A673 (cell line): ENCODE measurements at regions of chr16 and their contacts with region 1.

Region 1: GRCh38 chr16:67201411-67202223 is 2.7 kb downstream of the ELMO3 start:
- DNase-seq: no peak
- H3K4me3 ChIP-seq: no peak overlapping the region
- H3K27ac ChIP-seq: no peak overlapping the region
- H3K4me1 ChIP-seq: no peaks in the 10 kb centered on the region
- H3K27me3 ChIP-seq: no peaks in the 10 kb centered on the region
- CTCF ChIP-seq: no peak

Region 2: DNA sequence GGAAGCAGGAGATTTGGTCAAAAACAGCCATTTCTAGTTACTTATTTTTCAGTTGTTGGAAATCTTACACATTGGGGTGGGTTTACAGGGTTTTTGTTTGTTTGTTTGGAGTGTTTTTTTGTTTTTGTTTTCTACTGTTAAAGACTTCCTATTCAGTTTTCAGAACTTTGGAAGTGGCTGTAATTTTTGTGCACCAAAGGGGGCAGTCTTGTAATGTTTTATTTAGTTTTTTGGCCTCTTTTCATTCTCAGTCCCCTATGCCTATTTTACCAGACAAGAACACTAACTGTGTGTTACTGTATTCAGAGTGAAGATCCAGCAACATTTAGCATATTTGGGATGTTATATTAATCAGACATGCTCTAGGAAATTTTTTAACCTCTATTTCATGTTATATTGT is 171.0 kb after region 1 on chr16:
- CTCF ChIA-PET with region 1: interaction called, 13 read pairs
- POLR2A ChIA-PET with region 1: no interaction called
- intact Hi-C with region 1: no loop called
- DNase-seq: peak; percentile 34
- H3K4me3 ChIP-seq: no peak overlapping the region
- H3K27ac ChIP-seq: no peak overlapping the region
- H3K4me1 ChIP-seq: no peaks in the 10 kb centered on the region
- H3K27me3 ChIP-seq: peaks cover 14% of the 10 kb centered on the region
- CTCF ChIP-seq: peak; percentile 60